Activated naive CD4-positive, alpha-beta T cell treated with anti-CD3 and anti-CD28 coated beads for 36 hours (primary cell): ENCODE measurements at regions of chr21 and their contacts with region 1.

Region 1: DNA sequence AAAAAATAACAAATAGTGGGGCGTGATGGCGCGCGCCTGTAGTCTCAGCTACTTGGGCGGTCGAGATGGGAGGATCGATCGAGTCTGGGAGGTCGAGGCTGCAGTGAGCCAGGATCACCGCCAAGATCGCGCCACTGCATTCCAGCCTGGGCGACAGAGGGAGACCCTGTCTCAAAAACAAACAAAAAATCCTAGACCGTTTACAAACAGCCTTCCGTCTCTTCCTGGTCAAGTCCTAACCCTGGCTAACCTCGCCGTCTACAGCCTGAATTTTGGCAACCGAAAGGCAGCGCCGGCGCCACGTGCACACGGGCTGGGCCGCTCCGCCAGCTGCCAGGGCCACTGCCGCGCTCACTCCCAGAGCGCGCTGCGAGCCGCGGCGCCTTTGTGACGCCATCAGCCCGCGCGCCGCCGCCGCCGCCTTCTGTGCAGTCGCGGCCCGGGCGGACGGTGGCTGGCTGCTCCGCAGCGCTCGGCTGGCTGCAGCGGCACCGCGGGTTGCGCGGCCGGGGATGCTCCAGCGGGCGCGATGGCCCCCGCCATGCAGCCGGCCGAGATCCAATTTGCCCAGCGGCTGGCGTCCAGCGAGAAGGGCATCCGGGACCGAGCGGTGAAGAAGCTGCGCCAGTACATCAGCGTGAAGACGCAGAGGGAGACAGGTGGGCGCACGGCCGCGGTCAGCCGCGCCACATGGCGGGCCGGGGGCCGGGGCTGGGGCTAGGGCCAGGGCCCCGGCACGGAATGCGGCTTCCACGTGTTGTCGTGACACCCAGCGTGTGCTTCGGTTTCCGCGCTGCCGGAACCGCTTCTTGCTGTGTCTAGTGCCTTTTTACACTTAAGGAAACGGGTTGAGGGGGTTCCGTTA is at the starts of genes HSF2BP and RRP1B:
- DNase-seq: peak; percentile 79
- H3K4me3 Mint-ChIP-seq: peak within 1 kb of the TSS; percentile 98
- H3K27ac Mint-ChIP-seq: peak within 1 kb of the TSS; percentile 96
- H3K4me1 Mint-ChIP-seq: peaks cover 44% of the 10 kb centered on the region
- H3K27me3 Mint-ChIP-seq: no peaks in the 10 kb centered on the region
- total RNA-seq, gene HSF2BP: 1.3 to 2.1 TPM
- total RNA-seq, gene RRP1B: 59.6 to 60.6 TPM

Region 2: GRCh38 chr21:42892931-42893755 is 766.2 kb before region 1 on chr21 and contains the start of gene NDUFV3:
- CTCF ChIA-PET with region 1: no interaction called
- intact Hi-C with region 1: loop called (anchors 2 kb)
- DNase-seq: peak; percentile 100
- H3K4me3 Mint-ChIP-seq: peak within 1 kb of the TSS; percentile 85
- H3K27ac Mint-ChIP-seq: peak within 1 kb of the TSS; percentile 81
- H3K4me1 Mint-ChIP-seq: peaks cover 15% of the 10 kb centered on the region
- H3K27me3 Mint-ChIP-seq: no peaks in the 10 kb centered on the region
- total RNA-seq, gene NDUFV3: 11.5 to 12.5 TPM

Region 3: DNA sequence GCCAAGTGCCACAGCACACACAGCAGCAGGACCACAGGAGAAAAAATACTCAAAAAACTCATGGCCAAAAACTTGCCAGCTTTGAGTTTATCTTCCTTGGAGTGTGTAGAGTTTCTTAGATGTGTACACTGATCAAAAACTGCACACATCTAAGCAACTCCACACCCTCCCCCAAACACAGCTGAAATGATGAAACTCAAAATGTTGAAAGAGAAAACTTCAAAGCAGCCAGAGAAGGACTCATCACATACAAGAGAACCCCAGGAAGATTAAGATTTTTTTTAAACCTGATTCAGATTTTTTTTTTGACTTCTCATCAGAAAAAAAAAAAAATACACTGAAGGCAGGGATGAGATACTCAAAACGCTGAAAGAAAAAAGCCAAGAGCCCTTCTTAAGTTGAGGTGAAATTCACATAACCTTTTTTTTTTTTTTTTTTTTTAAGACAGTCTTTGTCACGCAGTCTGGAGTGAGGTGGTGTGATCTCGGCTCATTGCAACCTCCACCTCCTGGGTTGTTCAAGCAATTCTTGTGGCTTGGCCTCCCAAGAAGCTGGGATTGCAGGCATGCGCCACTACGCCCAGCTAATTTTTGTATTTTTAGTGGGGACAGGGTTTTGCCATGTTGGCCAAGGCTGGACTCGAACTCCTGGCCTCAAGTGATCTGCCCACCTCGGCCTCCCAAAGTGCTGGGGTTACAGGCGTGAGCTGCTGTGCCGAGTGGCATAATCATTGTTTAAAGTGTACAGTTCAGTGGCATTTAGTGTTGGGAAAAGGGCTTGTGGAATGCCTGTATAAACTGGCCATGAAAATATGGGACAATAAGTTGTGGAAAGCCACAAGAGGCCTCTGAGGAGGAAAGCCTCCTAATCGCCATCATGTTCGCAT is 38.6 kb after region 1 on chr21:
- CTCF ChIA-PET with region 1: no interaction called
- intact Hi-C with region 1: loop called (anchors 2 kb)
- DNase-seq: no peak
- H3K4me3 Mint-ChIP-seq: no peak overlapping the region
- H3K27ac Mint-ChIP-seq: no peak overlapping the region
- H3K4me1 Mint-ChIP-seq: peaks cover 12% of the 10 kb centered on the region
- H3K27me3 Mint-ChIP-seq: no peaks in the 10 kb centered on the region

Region 4: GRCh38 chr21:43728467-43729390 is 69.4 kb after region 1 on chr21:
- CTCF ChIA-PET with region 1: no interaction called
- intact Hi-C with region 1: loop called (anchors 2 kb)
- DNase-seq: peak; percentile 81
- H3K4me3 Mint-ChIP-seq: peak overlapping the region; percentile 85
- H3K27ac Mint-ChIP-seq: peak overlapping the region; percentile 88
- H3K4me1 Mint-ChIP-seq: peaks cover 51% of the 10 kb centered on the region
- H3K27me3 Mint-ChIP-seq: no peaks in the 10 kb centered on the region

Region 5: GRCh38 chr21:43775795-43776430 is 116.5 kb after region 1 on chr21 and contains the start of gene CSTB:
- CTCF ChIA-PET with region 1: no interaction called
- intact Hi-C with region 1: loop called (anchors 5 kb)
- DNase-seq: peak; percentile 85
- H3K4me3 Mint-ChIP-seq: peak within 1 kb of the TSS; percentile 80
- H3K27ac Mint-ChIP-seq: peak within 1 kb of the TSS; percentile 51
- H3K4me1 Mint-ChIP-seq: peaks cover 38% of the 10 kb centered on the region
- H3K27me3 Mint-ChIP-seq: no peaks in the 10 kb centered on the region
- total RNA-seq, gene CSTB: 22.8 to 23.0 TPM

Region 6: GRCh38 chr21:43789276-43790009 is 130.1 kb after region 1 on chr21 and contains the start of gene RRP1:
- CTCF ChIA-PET with region 1: no interaction called
- intact Hi-C with region 1: loop called (anchors 1 kb)
- DNase-seq: peak; percentile 91
- H3K4me3 Mint-ChIP-seq: peak within 1 kb of the TSS; percentile 90
- H3K27ac Mint-ChIP-seq: peak within 1 kb of the TSS; percentile 75
- H3K4me1 Mint-ChIP-seq: peaks cover 28% of the 10 kb centered on the region
- H3K27me3 Mint-ChIP-seq: no peaks in the 10 kb centered on the region
- total RNA-seq, gene RRP1: 33.6 to 35.5 TPM